ENCODE measurements at regions of chr1 and their contacts with region 1.

Region 1: GRCh38 chr1:147242439-147243227 is at the start of gene CHD1L:
- DNase-seq: peak; percentile 98
- H3K4me3 Mint-ChIP-seq: peak within 1 kb of the TSS; percentile 84
- H3K27ac Mint-ChIP-seq: peak within 1 kb of the TSS; percentile 88
- H3K4me1 Mint-ChIP-seq: peaks cover 34% of the 10 kb centered on the region
- H3K27me3 Mint-ChIP-seq: peaks cover 8% of the 10 kb centered on the region
- total RNA-seq, gene CHD1L: 72.9 and 80.3 TPM in 2 replicates

Region 2: GRCh38 chr1:147084273-147085096 is 158.1 kb before region 1 on chr1:
- intact Hi-C with region 1: loop called (anchors 1 kb)
- DNase-seq: peak; percentile 92
- H3K4me3 Mint-ChIP-seq: peak overlapping the region; percentile 87
- H3K27ac Mint-ChIP-seq: peak overlapping the region; percentile 100
- H3K4me1 Mint-ChIP-seq: peaks cover 28% of the 10 kb centered on the region
- H3K27me3 Mint-ChIP-seq: peaks cover 76% of the 10 kb centered on the region

Region 3: DNA sequence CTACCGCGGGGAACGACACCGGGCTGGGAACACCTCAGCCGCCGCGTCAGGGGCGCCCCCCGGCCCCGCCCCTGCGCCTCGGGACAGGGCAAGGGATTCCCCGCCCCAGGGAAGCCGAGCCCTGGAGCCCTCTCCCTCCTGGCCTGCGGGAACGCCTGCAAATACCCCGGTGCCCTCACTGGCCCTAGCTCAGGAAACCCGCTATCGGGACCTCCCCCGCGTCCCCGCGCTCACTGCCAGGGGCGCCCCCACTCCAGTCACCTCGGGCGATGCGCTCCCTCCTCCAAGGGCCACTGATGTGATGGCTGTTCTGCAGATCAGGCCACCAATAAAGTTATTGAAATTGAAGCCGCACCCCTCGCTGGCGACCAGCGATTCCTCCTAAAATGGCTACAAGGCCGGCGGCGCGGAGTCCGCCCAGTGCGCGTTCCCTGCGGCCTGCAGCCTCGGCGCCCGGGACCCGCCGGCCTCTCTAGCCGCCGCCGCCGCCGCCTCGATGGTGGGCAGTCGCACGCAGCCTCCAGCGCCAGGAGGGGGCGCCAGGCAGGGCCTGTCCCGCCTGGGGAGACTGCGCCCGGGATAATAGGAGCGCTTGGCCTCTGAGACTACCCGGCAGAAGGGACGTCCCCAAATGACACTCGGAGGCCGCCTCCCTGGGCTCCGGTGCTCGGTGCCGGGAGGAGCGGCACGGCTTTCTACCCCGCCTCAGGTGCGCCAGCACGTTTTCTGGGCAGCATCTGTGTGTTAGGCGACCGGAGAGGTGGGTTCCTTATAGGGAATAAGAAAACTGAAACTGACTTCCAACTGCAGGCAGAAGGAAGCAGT is 70.3 kb before region 1 on chr1 and contains the start of gene PRKAB2:
- intact Hi-C with region 1: loop called (anchors 1 kb)
- DNase-seq: peak; percentile 97
- H3K4me3 Mint-ChIP-seq: peak within 1 kb of the TSS; percentile 98
- H3K27ac Mint-ChIP-seq: peak within 1 kb of the TSS; percentile 96
- H3K4me1 Mint-ChIP-seq: peaks cover 32% of the 10 kb centered on the region
- H3K27me3 Mint-ChIP-seq: peaks cover 2% of the 10 kb centered on the region
- total RNA-seq, gene PRKAB2: 6.1 and 7.4 TPM in 2 replicates

Region 4: DNA sequence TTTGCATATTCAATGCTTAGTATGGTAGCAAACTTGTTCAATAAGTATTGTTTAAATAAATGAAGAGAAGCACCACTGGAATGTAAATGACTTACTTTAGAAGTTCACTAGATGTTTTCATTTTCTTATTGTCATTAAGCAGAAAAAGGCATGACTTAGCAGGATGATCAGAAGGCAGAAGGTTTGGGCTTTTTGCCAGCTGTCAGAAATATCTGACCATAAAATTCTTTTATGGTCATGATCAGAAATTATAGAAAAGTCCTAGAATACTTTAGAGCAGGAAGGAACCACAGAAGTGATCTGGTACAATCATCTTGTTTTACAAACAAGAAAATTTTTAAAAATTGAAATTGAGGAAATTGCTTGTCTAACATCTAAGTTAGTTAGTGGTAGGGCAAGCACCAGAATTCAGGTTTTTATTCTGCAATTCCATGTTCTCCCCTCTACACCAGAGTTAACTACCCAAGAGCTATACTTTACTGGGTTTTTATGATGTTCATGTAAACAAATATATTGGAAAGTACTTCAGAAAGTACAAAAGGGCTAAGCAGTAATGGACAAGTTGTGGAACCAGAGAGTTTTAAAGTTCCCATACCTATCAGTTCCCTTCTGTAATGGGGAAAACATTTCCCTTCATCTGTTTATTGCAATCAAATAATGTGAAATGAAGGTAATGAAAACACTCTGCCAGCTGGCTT is 27.6 kb before region 1 on chr1:
- intact Hi-C with region 1: no loop called
- DNase-seq: no peak
- H3K4me3 Mint-ChIP-seq: no peak overlapping the region
- H3K27ac Mint-ChIP-seq: no peak overlapping the region
- H3K4me1 Mint-ChIP-seq: no peaks in the 10 kb centered on the region
- H3K27me3 Mint-ChIP-seq: peaks cover 26% of the 10 kb centered on the region

Region 5: DNA sequence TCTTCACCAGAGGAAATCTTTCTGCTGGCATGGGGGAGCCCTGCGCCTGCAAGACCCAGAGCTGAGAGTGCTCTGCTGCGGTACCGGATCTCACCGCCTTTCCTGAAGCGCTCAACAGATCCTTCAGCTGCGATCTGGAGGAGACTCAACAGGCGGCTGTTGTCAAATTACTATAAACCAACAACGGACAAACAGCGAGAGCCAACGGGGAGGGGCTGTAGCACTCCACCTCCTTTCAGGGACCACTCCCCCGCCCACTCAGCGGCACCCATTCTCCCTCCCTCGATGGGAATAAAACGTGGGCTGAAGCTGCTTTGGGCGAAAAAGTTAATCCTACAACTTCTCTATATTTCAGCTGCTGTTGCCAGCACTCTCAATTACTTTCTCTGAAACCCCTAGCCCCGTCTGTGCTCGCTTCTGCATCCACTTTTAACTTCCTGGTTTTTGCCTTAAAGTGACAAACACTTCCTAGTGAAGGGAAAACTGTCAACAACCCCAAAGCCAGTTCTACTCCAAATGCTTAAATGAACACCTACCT is 17.4 kb before region 1 on chr1 and contains the start of gene FMO5:
- intact Hi-C with region 1: loop called (anchors 1 kb)
- DNase-seq: peak; percentile 82
- H3K4me3 Mint-ChIP-seq: peak within 1 kb of the TSS; percentile 93
- H3K27ac Mint-ChIP-seq: peak within 1 kb of the TSS; percentile 51
- H3K4me1 Mint-ChIP-seq: peaks cover 11% of the 10 kb centered on the region
- H3K27me3 Mint-ChIP-seq: peaks cover 12% of the 10 kb centered on the region
- total RNA-seq, gene FMO5: 0.12 TPM in 1 of 2 replicates, not detected in the other

Region 6: GRCh38 chr1:147264158-147264768 is 21.6 kb after region 1 on chr1:
- intact Hi-C with region 1: no loop called
- DNase-seq: no peak
- H3K4me3 Mint-ChIP-seq: no peak overlapping the region
- H3K27ac Mint-ChIP-seq: no peak overlapping the region
- H3K4me1 Mint-ChIP-seq: peaks cover 4% of the 10 kb centered on the region
- H3K27me3 Mint-ChIP-seq: no peaks in the 10 kb centered on the region

Region 7: DNA sequence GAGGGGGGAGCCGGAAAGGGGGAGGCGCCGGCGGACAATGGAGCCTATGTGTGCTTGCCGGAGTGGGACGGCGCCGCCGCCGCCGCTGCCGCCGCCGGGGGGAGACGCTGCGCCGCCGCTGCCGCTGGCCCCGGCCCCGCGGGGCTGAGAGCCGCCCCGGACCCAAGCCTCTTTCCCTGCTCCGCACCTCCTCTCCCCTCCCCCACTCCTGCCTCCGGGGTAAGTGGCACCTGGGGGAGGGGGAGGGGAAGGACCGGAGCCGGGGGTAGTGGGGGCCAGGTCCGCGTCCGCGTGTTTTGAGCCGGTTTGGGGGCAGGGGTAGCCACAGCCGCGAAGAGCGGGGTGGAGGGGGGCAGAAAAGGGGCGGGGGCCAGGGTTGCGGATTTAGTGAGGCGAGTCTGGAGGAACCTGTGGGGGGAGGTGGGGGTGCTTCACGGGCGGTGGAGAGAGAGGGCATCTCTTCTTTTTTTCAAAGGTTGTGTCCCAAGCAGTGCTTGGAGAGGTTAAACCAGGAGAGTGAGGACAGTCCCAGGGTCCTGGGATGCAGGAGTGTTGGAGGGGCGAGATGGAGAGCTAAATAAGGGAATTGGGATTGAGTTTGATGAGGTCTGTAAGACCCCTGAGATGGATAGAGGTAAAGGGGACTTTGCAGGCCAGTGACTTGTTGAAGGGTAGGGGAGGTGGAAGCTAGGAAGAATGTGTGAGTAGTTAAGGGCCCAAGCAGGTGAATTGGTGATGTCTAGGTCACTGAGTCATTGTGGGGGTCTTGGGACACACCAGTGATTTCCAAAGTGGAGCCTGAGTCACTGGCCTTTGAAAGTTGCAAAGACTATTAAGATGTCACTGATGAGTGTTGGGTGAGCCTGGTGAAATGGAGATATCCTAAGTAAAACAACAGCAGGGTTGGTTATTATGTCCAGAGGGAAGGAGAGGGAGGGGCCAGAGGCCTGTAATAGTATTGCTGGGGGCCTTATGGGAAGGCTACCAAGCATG is 357.8 kb after region 1 on chr1:
- intact Hi-C with region 1: no loop called
- DNase-seq: peak; percentile 60
- H3K4me3 Mint-ChIP-seq: peak overlapping the region; percentile 99
- H3K27ac Mint-ChIP-seq: peak overlapping the region; percentile 92
- H3K4me1 Mint-ChIP-seq: peaks cover 35% of the 10 kb centered on the region
- H3K27me3 Mint-ChIP-seq: peaks cover 12% of the 10 kb centered on the region

Measured in activated CD4-positive, alpha-beta T cell treated with anti-CD3 and anti-CD28 coated beads, Interleukin-2, amount 10 ng/mL, durations not matched to agents 24 days and 14 days (primary cell).